Activated naive CD4-positive, alpha-beta T cell treated with anti-CD3 and anti-CD28 coated beads, Interleukin-2, amount 10 ng/mL, durations not matched to agents 7 days and 5 days (primary cell): ENCODE measurements at regions of chr2 and their contacts with region 1.

Region 1: DNA sequence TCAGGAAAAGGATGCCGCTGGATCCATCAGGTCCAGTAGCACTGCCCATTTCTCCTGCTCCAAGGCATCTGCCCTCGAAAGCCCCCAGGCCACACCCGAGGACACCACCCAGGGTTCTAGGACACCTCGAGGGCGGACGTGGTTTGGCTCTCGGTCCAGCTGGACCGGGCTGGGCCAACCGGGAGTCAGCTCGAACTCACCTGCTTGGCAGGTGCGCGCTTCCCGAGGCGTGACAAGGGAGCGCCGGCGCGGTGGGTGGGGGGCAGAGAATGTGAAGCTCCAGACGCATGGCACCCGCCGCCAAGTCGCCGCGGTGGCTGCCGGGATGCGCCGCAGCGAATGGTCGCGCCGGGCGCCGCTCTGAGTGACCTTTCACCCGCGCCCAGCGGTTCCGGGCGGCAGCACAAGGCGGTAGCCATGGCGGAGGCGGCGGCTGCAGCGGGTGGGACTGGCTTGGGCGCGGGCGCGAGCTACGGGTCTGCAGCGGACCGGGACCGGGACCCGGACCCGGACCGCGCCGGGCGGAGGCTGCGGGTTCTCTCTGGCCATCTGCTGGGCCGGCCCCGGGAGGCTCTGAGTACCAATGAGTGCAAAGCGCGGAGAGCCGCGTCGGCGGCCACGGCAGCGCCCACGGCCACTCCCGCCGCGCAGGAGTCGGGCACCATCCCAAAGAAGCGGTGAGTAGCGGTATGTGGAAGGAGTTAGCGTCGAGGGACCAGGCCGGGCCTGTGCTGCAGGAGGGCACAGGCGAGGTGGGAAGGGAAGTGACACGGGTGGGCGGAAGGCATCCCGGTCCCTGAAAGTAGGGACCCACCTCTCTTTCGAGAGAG is at the start of gene AGPS:
- DNase-seq: peak; percentile 87
- H3K4me3 Mint-ChIP-seq: peak within 1 kb of the TSS; percentile 90
- H3K27ac Mint-ChIP-seq: peak within 1 kb of the TSS; percentile 90
- H3K4me1 Mint-ChIP-seq: peaks cover 52% of the 10 kb centered on the region
- H3K27me3 Mint-ChIP-seq: no peaks in the 10 kb centered on the region

Region 2: GRCh38 chr2:177281400-177282180 is 111.0 kb before region 1 on chr2:
- CTCF ChIA-PET with region 1: no interaction called
- DNase-seq: no peak
- H3K4me3 Mint-ChIP-seq: no peak overlapping the region
- H3K27ac Mint-ChIP-seq: no peak overlapping the region
- H3K4me1 Mint-ChIP-seq: peaks cover 20% of the 10 kb centered on the region
- H3K27me3 Mint-ChIP-seq: no peaks in the 10 kb centered on the region

Region 3: DNA sequence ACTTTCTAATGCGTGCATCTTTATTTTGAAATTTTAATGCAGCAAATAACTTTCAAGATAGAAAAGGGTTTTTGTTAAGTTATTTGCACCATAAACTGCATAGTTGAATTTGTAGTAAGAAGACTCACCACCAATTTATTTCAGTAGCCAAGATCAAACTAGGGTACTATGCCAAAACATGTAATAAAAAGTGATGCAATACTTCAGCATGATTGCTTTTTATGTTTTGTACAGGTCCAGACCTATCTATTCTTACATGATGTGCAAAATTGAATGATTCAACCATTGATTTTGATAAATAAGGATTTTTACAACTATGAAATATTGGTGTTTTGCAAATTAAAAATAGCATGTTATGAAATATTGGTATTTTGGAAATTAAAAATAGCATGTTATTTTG is 26.7 kb after region 1 on chr2:
- CTCF ChIA-PET with region 1: interaction called, 11 read pairs
- DNase-seq: no peak
- H3K4me3 Mint-ChIP-seq: no peak overlapping the region
- H3K27ac Mint-ChIP-seq: peak overlapping the region; percentile 24
- H3K4me1 Mint-ChIP-seq: peaks cover 10% of the 10 kb centered on the region
- H3K27me3 Mint-ChIP-seq: no peaks in the 10 kb centered on the region